ENCODE measurements at regions of chr6 and their contacts with region 1.

Region 1: DNA sequence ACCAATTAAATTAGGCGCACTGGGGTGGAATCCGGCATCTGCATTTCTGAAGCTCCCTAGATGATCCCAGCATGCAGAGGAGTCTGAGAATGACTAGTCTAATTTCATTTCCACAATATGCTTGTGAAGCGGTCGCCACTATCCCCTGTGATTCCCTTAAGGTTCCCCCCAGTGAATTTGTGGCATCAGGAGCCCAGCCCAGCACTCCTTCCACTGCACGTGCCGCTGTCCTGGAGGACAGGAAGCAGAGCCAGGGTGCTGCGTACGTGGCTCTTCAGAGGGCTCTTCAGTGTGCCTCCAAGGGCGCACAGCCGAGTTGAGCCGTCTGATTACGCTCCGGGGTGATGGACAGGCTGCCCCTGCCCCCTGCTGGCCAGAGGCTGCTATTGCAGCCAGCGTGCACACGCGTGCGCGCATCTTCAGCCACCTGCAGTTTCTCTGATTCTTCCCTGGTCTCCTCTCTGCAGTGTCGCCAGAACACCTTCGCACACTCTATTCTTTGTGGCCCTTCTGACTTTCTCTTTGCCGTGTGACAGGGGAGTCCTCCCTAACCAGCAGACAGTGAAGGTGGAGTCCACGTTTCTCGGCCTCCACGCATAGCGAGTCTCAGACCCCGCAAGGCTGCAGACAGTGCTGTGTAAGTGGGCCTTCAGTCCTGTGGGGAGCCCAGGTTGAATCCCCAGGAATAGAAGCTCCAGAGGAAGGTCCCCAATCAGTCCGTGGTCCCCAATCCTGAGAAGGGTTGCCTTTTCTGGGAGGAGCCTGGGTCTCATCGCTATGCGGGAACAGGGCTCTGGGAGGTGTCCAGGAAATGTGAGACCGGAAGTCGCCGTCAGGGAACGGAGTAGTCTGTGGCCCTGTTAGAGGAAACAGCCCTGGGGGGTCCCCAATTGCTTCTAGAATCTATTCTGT is 16.5 kb upstream of the NCR2 start:
- DNase-seq: peak; percentile 95
- H3K4me3 Mint-ChIP-seq: peak overlapping the region; percentile 68
- H3K27ac Mint-ChIP-seq: peak overlapping the region; percentile 72
- H3K4me1 Mint-ChIP-seq: peaks cover 18% of the 10 kb centered on the region
- H3K27me3 Mint-ChIP-seq: peaks cover 29% of the 10 kb centered on the region

Region 2: DNA sequence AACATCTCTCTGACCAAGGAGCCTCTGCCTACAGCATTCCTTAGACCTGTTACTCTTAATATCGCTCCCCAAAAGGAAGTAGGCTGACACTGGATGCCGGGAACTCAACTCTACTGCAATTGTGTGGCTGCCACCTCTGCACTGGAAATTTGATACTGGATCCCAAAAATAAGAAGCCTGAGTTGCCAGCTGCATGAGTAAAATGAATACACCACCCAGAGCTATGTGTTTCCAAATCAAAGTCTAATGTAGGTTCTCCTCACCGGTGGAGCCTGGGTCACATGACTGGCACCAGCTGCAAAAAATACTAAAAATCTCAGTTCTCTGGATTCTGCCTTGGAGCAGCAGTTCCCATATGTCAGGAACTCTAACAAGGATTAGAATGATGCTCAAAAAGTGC is 316.7 kb before region 1 on chr6:
- intact Hi-C with region 1: loop called (anchors 1 kb)
- DNase-seq: no peak
- H3K4me3 Mint-ChIP-seq: no peak overlapping the region
- H3K27ac Mint-ChIP-seq: no peak overlapping the region
- H3K4me1 Mint-ChIP-seq: peaks cover 6% of the 10 kb centered on the region
- H3K27me3 Mint-ChIP-seq: peaks cover 53% of the 10 kb centered on the region

Region 3: GRCh38 chr6:41092421-41093140 is 226.3 kb before region 1 on chr6:
- intact Hi-C with region 1: loop called (anchors 5 kb)
- DNase-seq: no peak
- H3K4me3 Mint-ChIP-seq: no peak overlapping the region
- H3K27ac Mint-ChIP-seq: no peak overlapping the region
- H3K4me1 Mint-ChIP-seq: peaks cover 3% of the 10 kb centered on the region
- H3K27me3 Mint-ChIP-seq: no peaks in the 10 kb centered on the region

Region 4: DNA sequence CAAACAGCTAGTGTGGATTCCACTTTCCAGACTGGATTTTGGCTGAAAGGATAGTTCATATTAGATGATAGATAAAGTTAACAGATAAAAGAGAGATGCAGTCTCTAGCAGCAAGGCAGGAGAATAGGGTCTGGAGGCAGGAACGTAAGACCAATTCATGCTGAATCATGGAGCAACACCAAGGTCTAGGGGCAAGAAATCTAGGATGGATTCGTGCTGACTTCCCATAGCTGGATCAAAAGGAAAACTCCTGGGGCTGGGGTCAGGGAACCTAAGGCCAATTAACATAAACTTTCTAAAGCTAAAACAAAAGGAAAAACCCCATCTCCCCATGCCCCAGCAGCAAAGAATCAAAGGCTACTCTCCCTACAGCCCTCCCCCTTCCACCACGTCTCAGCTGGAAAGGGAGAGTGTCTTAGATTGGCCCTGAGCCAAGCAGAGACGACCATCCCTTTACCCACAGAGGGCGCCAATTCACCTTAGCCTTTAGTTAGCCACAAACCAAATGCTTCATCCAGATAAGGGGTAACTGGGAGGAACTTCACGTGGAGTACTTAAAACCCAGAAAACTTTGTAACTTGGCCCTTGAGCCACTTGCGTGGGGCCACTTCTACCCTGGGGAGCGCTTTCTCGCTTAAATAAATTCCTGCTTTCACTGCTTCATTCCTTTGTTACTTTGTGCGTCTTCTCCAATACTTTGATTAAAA is 40.1 kb before region 1 on chr6:
- intact Hi-C with region 1: loop called (anchors 1 kb)
- DNase-seq: peak; percentile 89
- H3K4me3 Mint-ChIP-seq: no peak overlapping the region
- H3K27ac Mint-ChIP-seq: no peak overlapping the region
- H3K4me1 Mint-ChIP-seq: peaks cover 13% of the 10 kb centered on the region
- H3K27me3 Mint-ChIP-seq: peaks cover 13% of the 10 kb centered on the region

Region 5: GRCh38 chr6:41306187-41306854 is 12.6 kb before region 1 on chr6:
- intact Hi-C with region 1: loop called (anchors 1 kb)
- DNase-seq: peak; percentile 84
- H3K4me3 Mint-ChIP-seq: no peak overlapping the region
- H3K27ac Mint-ChIP-seq: no peak overlapping the region
- H3K4me1 Mint-ChIP-seq: peaks cover 5% of the 10 kb centered on the region
- H3K27me3 Mint-ChIP-seq: peaks cover 30% of the 10 kb centered on the region